WTC11 (cell line): ENCODE measurements at regions of chr18 and their contacts with region 1.

Region 1: GRCh38 chr18:3665780-3666525 is 216.0 kb downstream of the TGIF1 start:
- DNase-seq: peak; percentile 85
- ATAC-seq: peak; percentile 89
- H3K4me3 Mint-ChIP-seq: peak overlapping the region; percentile 65
- H3K27ac Mint-ChIP-seq: peak overlapping the region; percentile 98
- H3K4me1 Mint-ChIP-seq: peaks cover 27% of the 10 kb centered on the region
- H3K27me3 Mint-ChIP-seq: no peaks in the 10 kb centered on the region
- CTCF ChIP-seq: peak; percentile 94

Region 2: GRCh38 chr18:3297025-3297984 is 368.6 kb before region 1 on chr18:
- CTCF ChIA-PET with region 1: interaction called, 33 read pairs
- POLR2A ChIA-PET with region 1: interaction called, 8 read pairs
- DNase-seq: peak; percentile 97
- ATAC-seq: peak; percentile 94
- H3K4me3 Mint-ChIP-seq: peak overlapping the region; percentile 91
- H3K27ac Mint-ChIP-seq: peak overlapping the region; percentile 83
- H3K4me1 Mint-ChIP-seq: peaks cover 18% of the 10 kb centered on the region
- H3K27me3 Mint-ChIP-seq: peaks cover 4% of the 10 kb centered on the region; the same call in 1 of the 2 replicates
- CTCF ChIP-seq: peak; percentile 59

Region 3: DNA sequence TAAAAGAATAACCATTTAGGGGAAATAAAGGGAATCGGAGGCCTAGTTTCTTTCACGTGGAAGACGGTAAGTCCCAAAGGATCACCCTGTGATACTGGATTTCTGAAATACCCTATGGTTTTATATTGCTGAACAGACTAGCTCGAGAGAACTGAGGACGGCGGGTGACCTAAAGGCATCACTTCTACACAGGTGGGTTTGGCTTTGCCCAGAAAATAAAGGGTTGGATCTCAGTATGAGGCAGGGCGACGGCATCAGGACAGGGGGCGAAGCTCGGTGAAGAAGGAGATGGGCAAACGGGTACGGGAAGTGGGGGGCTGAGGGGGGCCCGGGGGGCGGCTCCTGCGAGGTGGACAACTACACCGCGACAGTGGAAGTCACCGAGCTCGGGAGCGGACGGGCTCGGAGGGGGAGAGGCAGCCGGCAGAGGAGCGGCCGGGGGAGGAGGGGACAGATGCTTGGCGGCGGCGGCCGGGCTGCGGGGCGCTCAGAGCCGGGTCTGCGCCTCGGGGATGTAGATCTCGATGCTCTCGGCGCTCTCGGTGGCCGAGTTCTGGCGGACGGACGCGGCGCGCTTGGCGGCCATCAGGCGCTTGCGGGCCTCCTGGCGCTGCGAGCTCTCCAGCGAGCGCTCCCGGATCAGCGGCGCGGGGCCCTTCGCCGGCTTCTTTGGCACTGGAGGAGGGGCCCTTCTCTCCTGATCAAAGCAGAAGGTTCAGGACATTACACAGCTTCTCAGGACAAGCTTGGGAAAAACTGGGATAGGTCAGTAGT is 167.1 kb before region 1 on chr18:
- CTCF ChIA-PET with region 1: interaction called, 14 read pairs
- POLR2A ChIA-PET with region 1: no interaction called
- DNase-seq: peak; percentile 78
- ATAC-seq: peak; percentile 82
- H3K4me3 Mint-ChIP-seq: peak overlapping the region; percentile 79
- H3K27ac Mint-ChIP-seq: peak overlapping the region; percentile 38; the same call in 1 of the 2 replicates
- H3K4me1 Mint-ChIP-seq: peaks cover 37% of the 10 kb centered on the region
- H3K27me3 Mint-ChIP-seq: peaks cover 10% of the 10 kb centered on the region
- CTCF ChIP-seq: no peak

Region 4: GRCh38 chr18:3604498-3605408 is 61.2 kb before region 1 on chr18:
- CTCF ChIA-PET with region 1: interaction called, 72 read pairs
- POLR2A ChIA-PET with region 1: interaction called, 37 read pairs
- DNase-seq: no peak
- ATAC-seq: no peak
- H3K4me3 Mint-ChIP-seq: no peak overlapping the region
- H3K27ac Mint-ChIP-seq: no peak overlapping the region
- H3K4me1 Mint-ChIP-seq: peaks cover 24% of the 10 kb centered on the region
- H3K27me3 Mint-ChIP-seq: no peaks in the 10 kb centered on the region
- CTCF ChIP-seq: no peak

Region 5: DNA sequence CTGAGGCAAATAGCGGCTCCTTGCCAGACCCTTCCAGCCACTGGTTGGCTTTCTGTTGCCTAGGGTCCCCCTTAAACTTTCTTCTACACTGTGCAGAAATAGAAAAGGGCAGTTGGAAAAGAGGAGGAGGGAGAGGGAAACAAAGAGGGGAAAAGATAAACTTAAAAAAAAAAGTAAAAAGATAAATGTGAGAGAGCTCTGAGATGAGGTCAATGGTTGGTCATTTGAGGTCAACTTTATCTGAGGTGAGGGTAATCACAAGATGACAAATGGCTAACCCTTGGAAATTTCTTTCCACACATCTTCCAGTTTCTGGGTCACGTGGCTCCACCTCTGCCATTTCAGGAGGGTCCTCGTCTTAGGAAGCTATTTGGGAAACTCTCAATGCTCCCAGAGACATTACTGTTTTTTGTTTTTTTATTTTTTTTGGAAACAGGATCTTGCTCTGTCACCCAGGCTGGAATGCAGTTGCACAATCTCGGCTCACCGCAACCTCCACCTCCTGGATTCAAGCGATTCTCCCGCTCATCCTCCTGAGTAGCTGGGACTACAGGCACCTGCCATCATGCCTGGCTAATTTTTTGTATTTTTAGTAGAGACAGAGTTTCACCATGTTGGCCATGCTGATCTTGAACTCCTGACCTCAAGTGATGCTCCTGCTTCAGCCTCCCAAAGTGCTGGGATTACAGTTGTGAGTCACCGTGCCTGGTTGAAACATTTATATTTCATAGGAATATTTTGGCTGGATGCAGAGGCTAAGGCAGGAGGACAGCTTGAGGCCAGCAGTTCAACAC is 16.1 kb before region 1 on chr18:
- CTCF ChIA-PET with region 1: interaction called, 19 read pairs
- POLR2A ChIA-PET with region 1: no interaction called
- DNase-seq: no peak
- ATAC-seq: no peak
- H3K4me3 Mint-ChIP-seq: no peak overlapping the region
- H3K27ac Mint-ChIP-seq: no peak overlapping the region
- H3K4me1 Mint-ChIP-seq: peaks cover 52% of the 10 kb centered on the region
- H3K27me3 Mint-ChIP-seq: peaks cover 32% of the 10 kb centered on the region
- CTCF ChIP-seq: no peak

Region 6: GRCh38 chr18:3692113-3692621 is 26.2 kb after region 1 on chr18:
- CTCF ChIA-PET with region 1: interaction called, 12 read pairs
- POLR2A ChIA-PET with region 1: no interaction called
- DNase-seq: no peak
- ATAC-seq: no peak
- H3K4me3 Mint-ChIP-seq: no peak overlapping the region
- H3K27ac Mint-ChIP-seq: no peak overlapping the region
- H3K4me1 Mint-ChIP-seq: peaks cover 16% of the 10 kb centered on the region
- H3K27me3 Mint-ChIP-seq: no peaks in the 10 kb centered on the region; the same call in 1 of the 2 replicates
- CTCF ChIP-seq: no peak

Region 7: DNA sequence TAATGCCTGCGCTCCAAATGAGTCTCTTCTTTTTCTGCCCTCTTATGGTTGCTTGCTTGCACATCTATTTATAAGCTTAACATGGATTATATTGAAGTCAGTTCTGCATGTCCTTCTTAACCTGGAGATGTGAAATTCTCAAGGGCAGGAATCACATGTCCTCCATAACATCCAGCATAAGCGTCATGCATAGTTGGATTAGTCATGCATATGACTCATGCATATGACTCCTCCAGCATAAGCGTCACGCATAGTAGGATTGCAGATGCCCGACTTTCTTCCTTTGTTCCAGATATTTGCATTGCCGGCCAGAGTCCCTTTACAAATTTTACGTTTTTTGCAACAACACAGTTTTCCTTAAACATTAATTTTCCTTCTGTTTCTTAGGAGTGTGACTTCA is 92.6 kb after region 1 on chr18:
- CTCF ChIA-PET with region 1: no interaction called
- POLR2A ChIA-PET with region 1: no interaction called
- DNase-seq: no peak
- ATAC-seq: no peak
- H3K4me3 Mint-ChIP-seq: no peak overlapping the region
- H3K27ac Mint-ChIP-seq: no peak overlapping the region
- H3K4me1 Mint-ChIP-seq: peaks cover 11% of the 10 kb centered on the region
- H3K27me3 Mint-ChIP-seq: no peaks in the 10 kb centered on the region
- CTCF ChIP-seq: no peak

Region 8: GRCh38 chr18:3798032-3798431 is 132.1 kb after region 1 on chr18:
- CTCF ChIA-PET with region 1: no interaction called
- POLR2A ChIA-PET with region 1: no interaction called
- DNase-seq: no peak
- ATAC-seq: no peak
- H3K4me3 Mint-ChIP-seq: no peak overlapping the region
- H3K27ac Mint-ChIP-seq: no peak overlapping the region
- H3K4me1 Mint-ChIP-seq: peaks cover 18% of the 10 kb centered on the region
- H3K27me3 Mint-ChIP-seq: no peaks in the 10 kb centered on the region
- CTCF ChIP-seq: no peak